ENCODE measurements at regions of chr16 and their contacts with region 1.

Region 1: DNA sequence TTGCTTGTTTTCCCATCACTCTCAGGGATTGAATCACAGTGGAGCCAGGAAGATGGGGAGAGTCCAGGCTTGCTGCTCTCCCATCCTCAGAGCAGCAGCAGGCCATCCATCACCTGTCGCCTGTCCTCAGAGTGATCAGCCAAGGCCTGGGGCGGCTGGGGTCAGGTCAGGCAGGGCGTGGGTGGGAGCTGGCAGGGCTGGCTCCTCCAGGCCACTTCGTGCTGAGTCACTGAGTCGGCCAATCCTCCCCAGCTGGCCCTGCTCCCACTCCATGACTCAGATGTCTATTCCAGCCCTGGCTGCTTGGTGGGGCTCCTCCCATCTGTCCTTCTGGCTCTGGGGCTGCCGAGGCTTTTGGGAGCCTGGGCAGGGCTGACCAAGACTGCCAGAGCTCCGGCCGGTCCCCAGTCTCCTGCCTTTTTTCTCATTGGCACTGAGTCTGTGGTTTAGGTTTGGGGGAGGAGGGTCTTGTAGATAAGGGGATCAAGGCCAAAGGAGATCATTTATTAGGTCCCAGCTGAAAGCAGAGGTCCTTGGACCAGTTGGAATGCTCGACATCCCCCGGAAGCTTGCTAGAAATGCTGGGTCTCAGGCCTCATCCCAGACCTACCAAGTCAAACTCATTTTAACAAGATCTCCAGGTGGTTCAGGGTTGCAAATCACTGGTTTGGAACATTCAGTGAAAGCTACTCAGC is 72.7 kb downstream of the ABCC1 start:
- DNase-seq: peak; percentile 98 to 100
- ATAC-seq: peak; percentile 86 to 94
- H3K4me3 ChIP-seq: peak overlapping the region in 3 of 4 donors; percentile 8 to 38 (median 32)
- H3K27ac ChIP-seq: peak overlapping the region; percentile 81 to 95 (median 88)
- H3K4me1 ChIP-seq: peaks cover 22 to 64% of the 10 kb centered on the region in 2 donors
- H3K27me3 ChIP-seq: no peaks in the 10 kb centered on the region
- CTCF ChIP-seq: no peak
- POLR2A ChIP-seq: peak; percentile 46 to 52

Region 2: GRCh38 chr16:15888072-15888976 is 133.8 kb before region 1 on chr16 and contains the start of gene CEP20:
- in situ Hi-C with region 1: loop called in 1 of 4 experiments (anchors 25 kb)
- intact Hi-C with region 1: loop called (anchors 2 kb)
- DNase-seq: peak; percentile 99
- ATAC-seq: peak; percentile 100
- H3K4me3 ChIP-seq: peak within 1 kb of the TSS; percentile 77 to 96 (median 82)
- H3K27ac ChIP-seq: peak within 1 kb of the TSS; percentile 89 to 96 (median 92)
- H3K4me1 ChIP-seq: peaks cover 25% of the 10 kb centered on the region in 2 donors
- H3K27me3 ChIP-seq: no peaks in the 10 kb centered on the region
- CTCF ChIP-seq: peak; percentile 22 to 48 (median 38)
- POLR2A ChIP-seq: peak; percentile 74 to 75
- total RNA-seq, gene CEP20: 42.2 to 87.8 (median 76.1) TPM

Measured in gastrocnemius medialis (tissue), 4 donors.